ENCODE measurements at regions of chr10 and their contacts with region 1.

Region 1: GRCh38 chr10:35451151-35452016 is 115.1 kb downstream of the CCNY start:
- H3K4me3 Mint-ChIP-seq: peak overlapping the region; percentile 53
- H3K27ac Mint-ChIP-seq: peak overlapping the region; percentile 91
- H3K4me1 Mint-ChIP-seq: peaks cover 81% of the 10 kb centered on the region
- H3K27me3 Mint-ChIP-seq: no peaks in the 10 kb centered on the region

Region 2: DNA sequence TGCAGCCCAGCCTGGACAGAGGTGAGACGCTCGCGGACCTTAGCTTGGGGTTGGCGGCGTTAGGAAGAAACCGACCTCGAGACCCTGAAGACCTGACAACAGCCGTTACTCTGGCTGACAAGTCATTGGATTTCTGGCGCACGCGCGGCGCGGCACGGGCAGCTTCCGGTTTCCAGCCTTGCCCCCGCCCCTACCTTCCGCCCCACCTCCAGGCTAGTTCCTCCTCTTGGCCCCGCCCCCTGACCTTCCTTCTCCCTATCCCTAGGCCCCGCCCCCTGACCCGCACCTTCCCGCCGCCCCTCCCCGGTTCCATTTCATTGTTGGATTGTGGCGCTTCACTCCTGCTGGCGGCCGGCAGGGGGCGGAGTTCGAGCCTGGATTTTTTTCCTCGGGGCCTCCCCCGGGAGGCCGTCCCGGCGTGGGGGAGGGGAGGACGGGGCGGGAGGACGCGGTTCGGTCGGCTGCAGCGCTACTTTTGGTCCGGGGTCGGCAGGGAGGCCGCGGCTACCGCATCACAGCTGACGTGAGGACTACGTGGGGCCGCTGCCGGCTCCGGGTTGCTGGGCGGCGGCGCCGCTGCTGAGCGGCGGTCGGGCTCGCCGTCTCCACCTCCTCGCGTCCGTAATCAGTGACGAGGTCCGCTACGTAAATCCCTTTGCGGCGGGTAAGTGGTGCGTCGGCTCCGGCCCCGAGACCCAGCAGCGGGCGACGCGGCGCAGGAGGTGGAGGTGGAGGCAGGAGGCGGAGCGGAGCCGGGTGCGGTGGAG is 324.7 kb before region 1 on chr10 and contains the start of gene CREM:
- intact Hi-C with region 1: loop called (anchors 2 kb)
- H3K4me3 Mint-ChIP-seq: peak within 1 kb of the TSS; percentile 84
- H3K27ac Mint-ChIP-seq: peak within 1 kb of the TSS; percentile 98
- H3K4me1 Mint-ChIP-seq: peaks cover 27% of the 10 kb centered on the region
- H3K27me3 Mint-ChIP-seq: no peaks in the 10 kb centered on the region

Region 3: DNA sequence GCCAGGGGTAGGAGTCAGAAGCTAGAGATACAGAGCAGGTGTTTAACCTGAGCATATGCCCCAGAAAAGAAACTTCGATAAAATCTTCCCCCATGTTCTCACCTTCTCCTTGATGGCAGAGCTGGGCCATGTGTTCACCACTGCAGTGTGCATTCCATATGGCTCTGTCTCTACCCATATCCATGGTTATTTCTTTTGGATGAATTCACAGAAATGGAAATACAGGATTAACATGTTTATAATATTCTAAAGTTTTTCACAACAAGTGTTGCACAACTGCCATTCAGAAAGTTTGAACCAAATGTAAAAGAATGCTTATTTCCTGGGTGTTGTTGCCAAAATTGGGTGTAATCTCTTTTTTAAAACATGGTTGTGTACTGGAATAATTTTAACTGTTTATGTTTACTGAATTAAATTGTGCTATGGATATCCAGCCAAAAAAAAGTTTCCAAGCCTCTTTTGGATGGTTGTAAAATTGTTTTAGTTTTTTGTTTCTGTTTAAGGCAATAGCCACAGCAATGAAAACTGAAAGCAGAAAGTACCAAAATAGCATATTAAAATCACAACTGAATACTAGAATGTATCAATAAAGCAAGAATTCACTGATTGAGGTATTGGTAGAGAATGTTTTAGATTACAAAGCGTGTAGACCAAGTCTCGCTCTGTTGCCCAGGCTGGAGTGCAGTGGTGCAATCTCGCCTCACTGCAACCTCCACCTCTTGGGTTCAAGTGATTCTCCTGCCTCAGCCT is 135.0 kb before region 1 on chr10:
- intact Hi-C with region 1: no loop called
- H3K4me3 Mint-ChIP-seq: no peak overlapping the region
- H3K27ac Mint-ChIP-seq: no peak overlapping the region
- H3K4me1 Mint-ChIP-seq: no peaks in the 10 kb centered on the region
- H3K27me3 Mint-ChIP-seq: no peaks in the 10 kb centered on the region

Region 4: GRCh38 chr10:35379226-35380137 is 71.9 kb before region 1 on chr10:
- intact Hi-C with region 1: loop called (anchors 10 kb)
- H3K4me3 Mint-ChIP-seq: peak overlapping the region; percentile 55
- H3K27ac Mint-ChIP-seq: peak overlapping the region; percentile 85
- H3K4me1 Mint-ChIP-seq: peaks cover 75% of the 10 kb centered on the region
- H3K27me3 Mint-ChIP-seq: no peaks in the 10 kb centered on the region

Region 5: GRCh38 chr10:35626971-35627507 is 175.7 kb after region 1 on chr10:
- intact Hi-C with region 1: no loop called
- H3K4me3 Mint-ChIP-seq: no peak overlapping the region
- H3K27ac Mint-ChIP-seq: no peak overlapping the region
- H3K4me1 Mint-ChIP-seq: no peaks in the 10 kb centered on the region
- H3K27me3 Mint-ChIP-seq: no peaks in the 10 kb centered on the region

Measured in dendritic cell treated with granulocyte-macrophage colony-stimulating factor and Interleukin-4, amounts not matched to agents 40 ng/mL and 50 ng/mL, for 4 days (primary cell).